Activated B cell treated with CpG ODN at 0.5 μM for 24 hours (primary cell): ENCODE measurements at regions of chr10 and their contacts with region 1.

Region 1: GRCh38 chr10:6382081-6382480 is 179.3 kb downstream of the PFKFB3 start:
- DNase-seq: no peak
- ATAC-seq: peak; percentile 90
- H3K4me3 Mint-ChIP-seq: peak overlapping the region; percentile 72
- H3K27ac Mint-ChIP-seq: peak overlapping the region; percentile 82
- H3K4me1 Mint-ChIP-seq: peaks cover 25% of the 10 kb centered on the region
- H3K27me3 Mint-ChIP-seq: no peaks in the 10 kb centered on the region
- CTCF ChIP-seq: no peak

Region 2: DNA sequence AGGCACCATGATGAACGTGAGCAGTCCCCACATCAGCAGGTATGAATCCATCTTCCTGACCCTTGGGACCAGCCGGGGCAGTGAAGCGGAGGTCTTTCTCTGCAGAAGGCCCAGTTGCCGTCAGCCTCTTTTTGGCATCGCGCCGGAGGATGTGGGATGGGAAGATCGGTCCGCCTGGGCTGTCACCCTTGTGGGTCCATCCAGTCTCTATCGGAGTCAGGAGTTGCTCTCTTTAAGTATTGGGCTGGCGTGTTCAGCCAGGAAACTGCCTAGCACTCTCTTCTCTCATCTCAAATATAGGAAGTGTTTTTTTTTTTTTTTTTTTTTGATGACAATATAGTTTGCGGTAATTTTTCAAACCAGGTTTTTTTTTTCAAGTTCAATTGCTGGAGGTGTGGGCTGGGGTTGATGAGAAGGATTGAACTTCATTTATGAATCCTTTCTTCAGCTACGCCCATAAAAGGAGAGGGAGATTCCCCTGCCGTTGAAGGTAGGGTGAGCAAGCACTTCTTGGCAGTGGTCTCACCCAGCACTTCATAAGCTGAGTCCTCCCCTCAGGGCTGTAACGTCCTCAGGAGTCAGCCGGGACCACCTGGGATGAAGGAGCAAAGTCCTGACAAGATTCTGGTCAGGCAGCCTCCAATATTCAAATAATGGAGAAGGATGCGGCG is 319.8 kb before region 1 on chr10 and contains the start of gene IL2RA:
- CTCF ChIA-PET with region 1: no interaction called
- POLR2A ChIA-PET with region 1: interaction called, 11 read pairs
- intact Hi-C with region 1: no loop called
- DNase-seq: peak; percentile 52
- ATAC-seq: peak; percentile 70
- H3K4me3 Mint-ChIP-seq: peak within 1 kb of the TSS; percentile 97
- H3K27ac Mint-ChIP-seq: peak within 1 kb of the TSS; percentile 93
- H3K4me1 Mint-ChIP-seq: peaks cover 75% of the 10 kb centered on the region
- H3K27me3 Mint-ChIP-seq: no peaks in the 10 kb centered on the region
- CTCF ChIP-seq: no peak
- total RNA-seq, gene IL2RA: 151 and 160 TPM in 2 replicates

Region 3: DNA sequence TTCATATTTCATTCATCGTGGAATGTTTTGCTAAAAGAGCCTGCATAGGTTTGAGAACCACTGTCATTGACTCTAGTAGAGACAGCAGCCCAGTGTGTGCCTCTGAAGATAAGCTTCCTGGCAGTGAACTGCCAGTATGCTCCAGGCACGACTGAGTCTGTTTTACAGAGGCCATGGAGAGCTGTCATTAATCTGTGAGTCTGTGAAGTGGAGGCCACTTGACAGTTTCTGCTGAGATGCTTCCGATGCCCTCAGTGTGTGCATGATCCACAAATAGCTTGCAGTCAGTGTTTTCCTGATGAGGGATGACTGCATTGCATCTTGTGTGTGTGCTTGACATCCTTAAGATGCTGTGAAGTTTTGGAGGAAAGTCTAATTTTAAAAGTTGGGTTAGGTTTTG is 17.2 kb before region 1 on chr10:
- CTCF ChIA-PET with region 1: interaction called, 7 read pairs
- POLR2A ChIA-PET with region 1: interaction called, 17 read pairs
- intact Hi-C with region 1: no loop called
- DNase-seq: no peak
- ATAC-seq: no peak
- H3K4me3 Mint-ChIP-seq: no peak overlapping the region
- H3K27ac Mint-ChIP-seq: no peak overlapping the region
- H3K4me1 Mint-ChIP-seq: peaks cover 4% of the 10 kb centered on the region
- H3K27me3 Mint-ChIP-seq: no peaks in the 10 kb centered on the region
- CTCF ChIP-seq: no peak